GM18951 (cell line): ENCODE measurements at regions of chr2 and their contacts with region 1.

Region 1: GRCh38 chr2:105114551-105114950 is 76.7 kb downstream of the MRPS9 start:
- POLR2A ChIP-seq: no peak

Region 2: DNA sequence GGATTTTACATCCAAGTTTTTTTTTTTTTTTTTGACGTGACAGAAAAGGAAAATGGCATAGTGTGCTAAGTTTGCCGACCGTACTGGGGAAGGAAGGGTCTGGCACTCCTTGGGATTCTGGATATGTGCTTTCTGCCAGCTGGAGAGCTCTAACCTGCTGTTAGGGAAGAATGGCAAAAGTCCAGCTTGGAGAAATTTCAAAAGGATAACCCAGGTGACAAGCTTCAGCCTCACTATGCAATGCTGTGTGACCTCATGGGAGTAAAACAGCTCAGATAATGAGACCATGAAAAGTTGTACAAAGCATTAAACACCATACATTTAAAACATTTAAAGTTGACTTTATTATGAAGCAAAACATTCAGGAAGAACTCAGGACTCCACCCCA is 116.7 kb after region 1 on chr2:
- in situ Hi-C with region 1: loop called (anchors 5 kb)
- POLR2A ChIP-seq: no peak